CD4-positive, alpha-beta memory T cell (primary cell): ENCODE measurements at regions of chr13 and their contacts with region 1.

Region 1: DNA sequence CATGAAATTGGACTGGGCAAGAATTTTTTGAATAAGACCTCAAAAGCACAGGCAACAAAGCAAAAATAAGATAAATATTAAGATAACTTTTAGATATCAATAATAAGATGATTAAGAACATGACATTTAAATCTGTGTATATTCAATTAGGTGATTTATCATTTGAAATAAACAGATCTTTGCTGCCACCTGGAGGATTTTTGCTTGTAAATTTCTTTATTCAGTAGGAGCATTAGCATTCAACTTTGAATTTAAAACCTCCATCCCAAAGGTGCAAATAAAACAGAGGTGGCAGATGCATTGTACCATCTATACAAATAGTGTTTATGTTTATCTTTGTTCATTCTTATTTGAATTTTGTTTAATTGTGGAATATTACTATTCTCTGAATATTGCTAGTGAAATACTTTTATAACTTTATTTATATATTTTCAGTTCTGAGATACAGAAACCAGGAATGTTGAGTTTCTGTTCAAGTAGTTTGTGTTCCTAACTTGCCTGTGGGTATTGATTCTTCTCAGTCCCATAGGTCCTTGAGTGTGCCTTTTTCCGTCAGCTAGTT is 20.9 kb downstream of the COG6 start:
- DNase-seq: peak in 4 of 5 donors; percentile 41 to 50 (median 44)
- H3K4me3 ChIP-seq: no peak overlapping the region
- H3K4me3 Mint-ChIP-seq: no peak overlapping the region
- H3K27ac ChIP-seq: no peak overlapping the region
- H3K27ac Mint-ChIP-seq: no peak overlapping the region
- H3K4me1 ChIP-seq: no peaks in the 10 kb centered on the region
- H3K4me1 Mint-ChIP-seq: peaks cover 0 to 2% (median under 1%) of the 10 kb centered on the region in 4 donors
- H3K27me3 ChIP-seq: no peaks in the 10 kb centered on the region
- H3K27me3 Mint-ChIP-seq: no peaks in the 10 kb centered on the region

Region 2: DNA sequence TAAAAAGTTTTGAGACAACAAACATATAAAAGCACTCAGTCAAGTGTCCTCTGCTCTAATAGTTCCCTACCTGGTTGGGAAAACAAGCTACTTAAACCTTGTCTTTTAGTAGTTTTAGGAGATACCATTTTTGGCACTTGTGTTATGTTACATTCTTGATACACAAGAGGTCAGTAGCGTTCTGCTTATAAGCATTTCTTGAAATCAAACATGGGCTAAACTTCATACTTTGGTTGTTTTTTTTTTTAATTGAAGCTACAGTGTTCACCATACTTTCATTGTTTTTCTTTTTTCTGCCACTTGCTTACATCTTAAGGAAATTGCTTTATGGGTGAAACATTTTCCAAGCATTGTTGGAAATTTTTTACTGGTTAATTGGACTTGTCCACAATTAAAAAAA is 625.2 kb before region 1 on chr13:
- CTCF ChIA-PET with region 1: no interaction called
- POLR2A ChIA-PET with region 1: no interaction called
- intact Hi-C with region 1: loop called (anchors 2 kb)
- DNase-seq: peak in 4 of 5 donors; percentile 19 to 26 (median 22)
- H3K4me3 ChIP-seq: no peak overlapping the region
- H3K4me3 Mint-ChIP-seq: no peak overlapping the region
- H3K27ac ChIP-seq: no peak overlapping the region
- H3K27ac Mint-ChIP-seq: no peak overlapping the region
- H3K4me1 ChIP-seq: no peaks in the 10 kb centered on the region
- H3K4me1 Mint-ChIP-seq: peaks cover 4 to 12% (median 7%) of the 10 kb centered on the region in 4 donors
- H3K27me3 ChIP-seq: no peaks in the 10 kb centered on the region
- H3K27me3 Mint-ChIP-seq: no peaks in the 10 kb centered on the region

Region 3: GRCh38 chr13:39144941-39145533 is 531.4 kb before region 1 on chr13:
- CTCF ChIA-PET with region 1: interaction called, 5 read pairs
- POLR2A ChIA-PET with region 1: no interaction called
- intact Hi-C with region 1: loop called (anchors 5 kb)
- DNase-seq: peak in 1 of 5 donors; percentile 10
- H3K4me3 ChIP-seq: no peak overlapping the region
- H3K4me3 Mint-ChIP-seq: no peak overlapping the region
- H3K27ac ChIP-seq: no peak overlapping the region
- H3K27ac Mint-ChIP-seq: peak overlapping the region in 1 of 7 donors; percentile 27
- H3K4me1 ChIP-seq: no peaks in the 10 kb centered on the region
- H3K4me1 Mint-ChIP-seq: peaks cover 5 to 15% (median 7%) of the 10 kb centered on the region in 4 donors
- H3K27me3 ChIP-seq: no peaks in the 10 kb centered on the region
- H3K27me3 Mint-ChIP-seq: peaks cover 5 to 11% of the 10 kb centered on the region in 2 donors

Region 4: DNA sequence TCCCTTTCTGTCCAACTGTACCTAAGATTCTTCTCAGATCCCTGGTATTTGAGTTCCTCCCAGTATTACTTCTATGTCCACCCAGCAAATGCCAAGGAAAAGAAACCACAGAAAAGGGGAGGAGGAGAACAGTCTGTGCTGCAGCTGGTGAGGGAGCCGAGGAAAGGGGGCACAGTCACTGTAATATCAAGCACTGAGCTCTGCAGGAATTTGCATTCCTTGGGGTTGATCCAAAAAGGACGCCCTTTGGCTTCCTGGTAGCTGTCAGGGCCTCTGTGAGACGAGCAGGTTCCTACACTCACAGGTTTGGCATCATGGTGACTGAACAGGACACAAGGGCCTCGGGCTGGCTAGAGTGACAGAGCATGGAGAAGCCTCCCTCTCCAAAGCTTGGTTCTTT is 364.8 kb before region 1 on chr13:
- CTCF ChIA-PET with region 1: no interaction called
- POLR2A ChIA-PET with region 1: no interaction called
- intact Hi-C with region 1: no loop called
- DNase-seq: no peak
- H3K4me3 ChIP-seq: no peak overlapping the region
- H3K4me3 Mint-ChIP-seq: no peak overlapping the region
- H3K27ac ChIP-seq: no peak overlapping the region
- H3K27ac Mint-ChIP-seq: no peak overlapping the region
- H3K4me1 ChIP-seq: no peaks in the 10 kb centered on the region
- H3K4me1 Mint-ChIP-seq: no peaks in the 10 kb centered on the region
- H3K27me3 ChIP-seq: no peaks in the 10 kb centered on the region
- H3K27me3 Mint-ChIP-seq: peaks cover 0 to 8% of the 10 kb centered on the region in 2 donors